Activated CD4-positive, alpha-beta T cell treated with anti-CD3 and anti-CD28 coated beads, Interleukin-2, amount 10 ng/mL, durations not matched to agents 24 days and 14 days (primary cell): ENCODE measurements at regions of chr15 and their contacts with region 1.

Region 1: GRCh38 chr15:47987908-47988532 is 132.8 kb upstream of the SLC24A5 start:
- DNase-seq: peak; percentile 76
- H3K4me3 Mint-ChIP-seq: no peak overlapping the region
- H3K27ac Mint-ChIP-seq: no peak overlapping the region
- H3K4me1 Mint-ChIP-seq: peaks cover 4% of the 10 kb centered on the region
- H3K27me3 Mint-ChIP-seq: peaks cover 3% of the 10 kb centered on the region

Region 2: GRCh38 chr15:47473832-47474231 is 514.2 kb before region 1 on chr15:
- intact Hi-C with region 1: loop called (anchors 5 kb)
- DNase-seq: no peak
- H3K4me3 Mint-ChIP-seq: no peak overlapping the region
- H3K27ac Mint-ChIP-seq: no peak overlapping the region
- H3K4me1 Mint-ChIP-seq: peaks cover 1% of the 10 kb centered on the region
- H3K27me3 Mint-ChIP-seq: no peaks in the 10 kb centered on the region

Region 3: GRCh38 chr15:47711654-47712053 is 276.4 kb before region 1 on chr15:
- intact Hi-C with region 1: loop called (anchors 5 kb)
- DNase-seq: no peak
- H3K4me3 Mint-ChIP-seq: no peak overlapping the region
- H3K27ac Mint-ChIP-seq: no peak overlapping the region
- H3K4me1 Mint-ChIP-seq: no peaks in the 10 kb centered on the region
- H3K27me3 Mint-ChIP-seq: peaks cover 14% of the 10 kb centered on the region